ENCODE measurements at regions of chr7 and their contacts with region 1.

Region 1: DNA sequence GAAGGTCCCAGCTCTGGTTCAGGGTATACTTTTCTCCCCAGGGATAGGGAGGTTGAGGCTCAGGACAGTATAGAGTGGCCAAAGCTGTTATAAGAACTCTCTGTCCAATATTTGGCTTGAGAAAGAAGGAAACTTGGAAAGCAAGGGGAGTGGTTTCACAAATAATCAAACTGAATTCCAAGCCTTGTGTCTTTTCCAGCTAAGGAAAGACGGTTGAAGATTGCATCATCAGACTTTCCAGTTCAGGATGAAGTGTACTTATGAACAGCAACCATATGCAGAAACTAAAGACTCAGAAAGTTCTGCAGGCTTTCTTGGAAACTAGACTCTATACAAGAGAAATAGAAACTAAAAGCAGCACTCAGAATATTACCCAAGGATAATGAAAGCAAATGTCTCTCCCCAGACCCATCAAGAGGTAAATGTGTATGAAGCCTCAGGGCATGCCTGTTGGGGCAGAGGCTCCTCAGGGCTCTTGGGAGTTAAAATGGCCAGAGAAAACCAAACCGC is 46.4 kb downstream of the RAMP3 start:
- DNase-seq: no peak
- ATAC-seq: peak; percentile 55 to 73 (median 64)
- H3K4me3 ChIP-seq: peak overlapping the region in 9 of 12 donors; percentile 13 to 56 (median 31)
- H3K27ac ChIP-seq: peak overlapping the region in 11 of 12 donors; percentile 6 to 92 (median 65)
- H3K4me1 ChIP-seq: peaks cover 0 to 36% (median 10%) of the 10 kb centered on the region in 12 donors
- H3K27me3 ChIP-seq: no peaks in the 10 kb centered on the region
- CTCF ChIP-seq: no peak
- POLR2A ChIP-seq: no peak

Region 2: GRCh38 chr7:44565097-44565794 is 638.7 kb before region 1 on chr7:
- intact Hi-C with region 1: no loop called
- DNase-seq: peak; percentile 50 to 86 (median 73)
- ATAC-seq: peak; percentile 73 to 91 (median 88)
- H3K4me3 ChIP-seq: no peak overlapping the region
- H3K27ac ChIP-seq: peak overlapping the region in 1 of 12 donors; percentile 37
- H3K4me1 ChIP-seq: peaks cover 0 to 11% (median 1%) of the 10 kb centered on the region in 12 donors
- H3K27me3 ChIP-seq: no peaks in the 10 kb centered on the region
- CTCF ChIP-seq: peak; percentile 92 to 99 (median 97)
- POLR2A ChIP-seq: no peak

Region 3: GRCh38 chr7:45165857-45166256 is 38.1 kb before region 1 on chr7:
- intact Hi-C with region 1: loop called in 1 of 10 experiments (anchors 5 kb)
- DNase-seq: no peak
- ATAC-seq: no peak
- H3K4me3 ChIP-seq: no peak overlapping the region
- H3K27ac ChIP-seq: no peak overlapping the region
- H3K4me1 ChIP-seq: peaks cover 0 to 8% (median 0%) of the 10 kb centered on the region in 12 donors
- H3K27me3 ChIP-seq: no peaks in the 10 kb centered on the region
- CTCF ChIP-seq: no peak
- POLR2A ChIP-seq: no peak

Region 4: DNA sequence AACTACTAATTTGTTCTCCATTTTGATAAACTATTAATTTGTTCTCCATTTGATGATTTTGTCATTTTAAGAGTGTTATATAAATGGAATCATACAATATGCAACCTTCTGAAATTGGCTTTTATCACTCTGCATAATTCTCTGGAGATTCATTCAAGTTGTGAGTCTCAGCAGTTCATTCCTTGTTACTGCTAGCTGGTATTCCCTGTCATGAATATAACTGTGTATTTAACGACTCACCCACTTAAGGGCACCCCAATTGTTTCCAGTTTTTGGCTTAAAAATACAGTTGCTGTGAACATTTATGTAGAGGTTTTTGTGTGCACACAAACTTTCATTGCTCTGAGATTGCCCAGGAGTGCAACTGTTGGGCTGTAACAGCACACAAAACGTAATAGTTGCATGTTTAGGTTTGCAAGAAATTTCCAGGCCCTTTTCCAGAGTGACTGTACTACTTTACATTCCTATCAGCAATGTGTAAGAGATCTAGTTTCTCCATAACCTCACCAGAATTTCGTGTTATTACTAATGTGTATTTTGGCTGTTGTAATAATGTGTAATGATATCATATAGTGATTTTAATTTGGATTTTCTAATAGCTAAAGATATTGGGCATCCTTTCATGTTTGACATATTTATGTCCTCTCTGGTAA is 217.0 kb after region 1 on chr7:
- intact Hi-C with region 1: no loop called
- DNase-seq: no peak
- ATAC-seq: no peak
- H3K4me3 ChIP-seq: no peak overlapping the region
- H3K27ac ChIP-seq: no peak overlapping the region
- H3K4me1 ChIP-seq: no peaks in the 10 kb centered on the region
- H3K27me3 ChIP-seq: peaks cover 0 to 6% (median 0%) of the 10 kb centered on the region in 9 donors
- CTCF ChIP-seq: no peak
- POLR2A ChIP-seq: no peak

Region 5: GRCh38 chr7:45484094-45484493 is 280.1 kb after region 1 on chr7:
- intact Hi-C with region 1: no loop called
- DNase-seq: no peak
- ATAC-seq: no peak
- H3K4me3 ChIP-seq: no peak overlapping the region
- H3K27ac ChIP-seq: no peak overlapping the region
- H3K4me1 ChIP-seq: no peaks in the 10 kb centered on the region
- H3K27me3 ChIP-seq: no peaks in the 10 kb centered on the region
- CTCF ChIP-seq: no peak
- POLR2A ChIP-seq: no peak

Measured in heart left ventricle (tissue), 16 donors.